Dendritic cell treated with granulocyte-macrophage colony-stimulating factor and Interleukin-4, amounts not matched to agents 40 ng/mL and 50 ng/mL, for 4 days (primary cell): ENCODE measurements at regions of chr12 and their contacts with region 1.

Region 1: GRCh38 chr12:69254046-69254445 is 14.7 kb downstream of the CPSF6 start:
- H3K4me3 Mint-ChIP-seq: no peak overlapping the region
- H3K27ac Mint-ChIP-seq: no peak overlapping the region
- H3K4me1 Mint-ChIP-seq: peaks cover 27% of the 10 kb centered on the region
- H3K27me3 Mint-ChIP-seq: no peaks in the 10 kb centered on the region

Region 2: GRCh38 chr12:68821357-68822188 is 432.5 kb before region 1 on chr12:
- intact Hi-C with region 1: no loop called
- H3K4me3 Mint-ChIP-seq: no peak overlapping the region
- H3K27ac Mint-ChIP-seq: peak overlapping the region; percentile 22
- H3K4me1 Mint-ChIP-seq: peaks cover 31% of the 10 kb centered on the region
- H3K27me3 Mint-ChIP-seq: no peaks in the 10 kb centered on the region

Region 3: DNA sequence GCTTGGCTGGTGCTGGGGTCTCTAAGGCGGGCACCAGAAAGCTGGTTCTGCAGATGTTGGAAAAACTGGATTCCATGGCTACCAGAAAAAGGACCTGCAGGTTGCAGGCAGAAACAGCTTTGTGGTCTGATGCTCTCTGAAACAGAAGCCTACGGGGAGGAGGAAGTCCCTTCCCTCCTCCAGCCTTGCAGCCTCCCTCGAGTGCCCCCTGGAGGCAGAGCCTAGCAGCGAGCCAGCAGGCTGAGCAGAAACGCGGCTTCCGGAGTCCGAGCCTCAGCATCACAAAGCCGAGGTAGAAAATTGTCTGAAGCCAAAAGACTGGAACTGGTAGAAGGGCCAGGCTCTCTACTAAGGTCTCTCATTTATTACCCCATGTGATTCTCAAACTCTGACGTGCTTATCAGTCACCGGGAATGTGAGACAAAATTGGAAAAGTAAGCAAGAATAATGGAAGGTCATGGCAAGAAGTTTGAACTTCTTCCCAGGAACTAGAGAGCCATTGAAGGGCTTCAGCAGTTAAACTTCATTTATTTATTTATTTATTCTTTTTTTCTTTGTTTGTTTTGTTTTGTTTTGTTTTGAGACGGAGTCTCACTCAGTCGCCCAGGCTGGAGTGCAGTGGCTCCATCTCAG is 96.9 kb before region 1 on chr12:
- intact Hi-C with region 1: loop called (anchors 1 kb)
- H3K4me3 Mint-ChIP-seq: peak overlapping the region; percentile 1
- H3K27ac Mint-ChIP-seq: no peak overlapping the region
- H3K4me1 Mint-ChIP-seq: peaks cover 5% of the 10 kb centered on the region
- H3K27me3 Mint-ChIP-seq: peaks cover 2% of the 10 kb centered on the region

Region 4: DNA sequence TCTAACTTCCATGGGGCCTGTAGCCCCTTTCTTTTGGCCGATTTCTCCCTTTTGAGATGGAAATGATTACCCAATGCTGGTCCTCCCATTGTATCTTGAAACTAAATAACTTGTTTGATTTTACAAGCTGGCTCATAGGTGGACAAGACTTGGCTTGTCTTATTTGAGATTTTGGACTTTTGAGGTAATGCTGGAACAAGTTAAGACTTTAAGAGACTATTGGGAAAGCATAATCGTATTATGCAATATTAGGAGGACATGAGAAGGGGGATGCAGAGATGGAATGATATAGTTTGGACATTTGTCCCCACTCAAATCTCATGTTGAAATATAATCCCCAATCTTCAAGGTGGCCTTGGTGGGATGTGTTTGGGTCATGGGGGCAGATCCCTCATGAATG is 44.9 kb after region 1 on chr12:
- intact Hi-C with region 1: no loop called
- H3K4me3 Mint-ChIP-seq: no peak overlapping the region
- H3K27ac Mint-ChIP-seq: no peak overlapping the region
- H3K4me1 Mint-ChIP-seq: peaks cover 11% of the 10 kb centered on the region
- H3K27me3 Mint-ChIP-seq: no peaks in the 10 kb centered on the region